ENCODE measurements at regions of chr11 and their contacts with region 1.

Region 1: DNA sequence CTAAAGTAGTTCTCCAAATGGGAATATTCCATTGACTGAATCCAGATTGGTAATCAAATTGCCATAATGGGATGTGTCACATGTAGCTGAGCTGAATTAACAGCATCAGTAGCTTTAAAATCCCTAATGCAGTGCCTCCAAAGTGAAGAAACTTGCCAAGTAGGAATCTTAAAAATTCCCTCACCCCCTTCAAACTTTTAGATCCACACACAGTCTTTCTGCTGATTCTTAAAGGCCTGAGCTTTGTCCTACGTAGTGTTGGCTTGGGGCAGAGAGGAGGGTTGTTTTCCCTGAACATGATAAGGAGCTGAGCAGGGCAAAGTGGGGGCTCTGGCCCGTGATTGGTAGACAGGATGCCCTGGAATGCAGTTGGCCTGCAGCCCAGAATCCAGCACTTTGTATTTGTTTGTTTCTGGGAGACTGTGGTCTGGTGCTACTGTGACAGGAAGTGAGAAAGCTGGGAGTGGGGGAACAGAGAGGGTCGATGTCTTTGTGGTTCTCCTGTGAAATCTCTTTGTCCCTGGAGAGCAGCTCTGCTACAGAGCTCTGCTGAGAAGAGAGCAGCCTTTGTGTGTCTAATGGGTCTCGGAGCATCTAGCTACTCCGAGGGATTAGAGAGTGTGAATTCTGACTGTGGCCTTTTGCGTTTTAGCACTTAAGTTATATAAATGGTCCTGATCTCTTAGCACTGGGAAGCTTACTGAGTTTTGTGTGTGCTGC is 16.9 kb downstream of the CTNND1 start:
- DNase-seq: no peak
- CTCF ChIP-seq: no peak

Region 2: GRCh38 chr11:57761301-57762234 is 16.9 kb before region 1 on chr11 and contains the start of gene CTNND1:
- CTCF ChIA-PET with region 1: interaction called, 23 read pairs
- POLR2A ChIA-PET with region 1: interaction called, 4 read pairs
- DNase-seq: peak; percentile 87
- CTCF ChIP-seq: no peak